ENCODE measurements at regions of chr11 and their contacts with region 1.

Region 1: GRCh38 chr11:14249121-14249963 is 109.6 kb downstream of the RRAS2 start:
- DNase-seq: peak in 1 of 2 experiments; percentile 31
- H3K4me3 ChIP-seq: no peak overlapping the region
- H3K27ac ChIP-seq: no peak overlapping the region
- H3K4me1 ChIP-seq: no peaks in the 10 kb centered on the region
- H3K27me3 ChIP-seq: no peaks in the 10 kb centered on the region
- CTCF ChIP-seq: peak; percentile 90

Region 2: DNA sequence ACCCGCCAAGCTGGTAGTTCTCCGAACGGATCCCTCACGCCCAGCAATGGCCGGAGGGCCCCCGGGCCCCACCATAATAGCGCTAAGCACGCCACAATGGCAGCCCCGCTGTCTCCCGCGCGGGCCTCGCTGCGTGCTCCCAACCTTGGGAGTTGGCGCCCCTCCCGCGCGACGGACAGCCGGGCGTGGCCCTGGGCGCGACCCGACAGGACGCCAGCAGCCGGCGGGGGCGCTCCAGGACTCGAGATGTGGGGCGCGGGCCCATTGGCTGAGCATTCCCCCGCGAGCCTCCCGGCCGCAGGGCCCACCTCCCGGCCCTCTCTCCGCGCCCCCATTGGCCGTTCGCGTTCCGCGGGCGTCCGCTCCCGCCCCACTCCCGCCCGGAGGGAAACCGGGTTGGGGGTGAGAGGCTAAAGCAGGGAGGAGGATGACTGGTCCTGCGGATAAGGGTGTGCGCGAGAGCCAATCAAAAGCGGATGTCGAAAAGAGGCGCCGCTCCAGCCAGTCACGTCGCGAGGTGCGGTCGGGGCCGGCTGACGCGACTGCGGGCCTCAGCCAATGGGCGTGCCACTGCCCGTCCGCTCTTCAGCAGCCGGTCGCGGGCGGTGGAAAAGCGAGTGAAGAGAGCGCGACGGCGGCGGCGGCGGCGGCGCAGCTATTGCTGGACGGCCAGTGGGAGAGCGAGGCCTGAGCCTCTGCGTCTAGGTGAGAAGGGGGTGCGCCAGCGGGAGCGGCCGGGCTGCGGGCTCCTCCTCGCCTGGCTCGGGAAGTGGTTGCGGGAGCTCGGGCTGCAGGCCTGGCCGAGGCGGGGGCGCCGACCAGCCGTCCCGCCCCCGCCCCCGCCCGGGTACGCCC is 581.0 kb before region 1 on chr11 and contains the start of gene FAR1:
- CTCF ChIA-PET with region 1: no interaction called
- POLR2A ChIA-PET with region 1: no interaction called
- intact Hi-C with region 1: loop called (anchors 5 kb)
- DNase-seq: peak; percentile 91 to 94
- H3K4me3 ChIP-seq: peak within 1 kb of the TSS; percentile 73
- H3K27ac ChIP-seq: peak within 1 kb of the TSS; percentile 40
- H3K4me1 ChIP-seq: peaks cover 19% of the 10 kb centered on the region
- H3K27me3 ChIP-seq: no peaks in the 10 kb centered on the region
- CTCF ChIP-seq: no peak; the same call in 1 of the 2 replicates
- total RNA-seq, gene FAR1: 34.1 and 34.4 TPM in 2 replicates

Region 3: GRCh38 chr11:13868710-13869397 is 380.5 kb before region 1 on chr11:
- CTCF ChIA-PET with region 1: no interaction called
- POLR2A ChIA-PET with region 1: no interaction called
- intact Hi-C with region 1: loop called (anchors 2 kb)
- DNase-seq: no peak
- H3K4me3 ChIP-seq: no peak overlapping the region
- H3K27ac ChIP-seq: no peak overlapping the region
- H3K4me1 ChIP-seq: peaks cover 18% of the 10 kb centered on the region
- H3K27me3 ChIP-seq: no peaks in the 10 kb centered on the region
- CTCF ChIP-seq: no peak

Region 4: GRCh38 chr11:13970986-13971385 is 278.4 kb before region 1 on chr11:
- CTCF ChIA-PET with region 1: no interaction called
- POLR2A ChIA-PET with region 1: no interaction called
- intact Hi-C with region 1: loop called (anchors 5 kb)
- DNase-seq: peak; percentile 45 to 72
- H3K4me3 ChIP-seq: no peak overlapping the region
- H3K27ac ChIP-seq: peak overlapping the region; percentile 17; the same call in 1 of the 2 replicates
- H3K4me1 ChIP-seq: peaks cover 12% of the 10 kb centered on the region
- H3K27me3 ChIP-seq: no peaks in the 10 kb centered on the region
- CTCF ChIP-seq: peak; percentile 71

Region 5: DNA sequence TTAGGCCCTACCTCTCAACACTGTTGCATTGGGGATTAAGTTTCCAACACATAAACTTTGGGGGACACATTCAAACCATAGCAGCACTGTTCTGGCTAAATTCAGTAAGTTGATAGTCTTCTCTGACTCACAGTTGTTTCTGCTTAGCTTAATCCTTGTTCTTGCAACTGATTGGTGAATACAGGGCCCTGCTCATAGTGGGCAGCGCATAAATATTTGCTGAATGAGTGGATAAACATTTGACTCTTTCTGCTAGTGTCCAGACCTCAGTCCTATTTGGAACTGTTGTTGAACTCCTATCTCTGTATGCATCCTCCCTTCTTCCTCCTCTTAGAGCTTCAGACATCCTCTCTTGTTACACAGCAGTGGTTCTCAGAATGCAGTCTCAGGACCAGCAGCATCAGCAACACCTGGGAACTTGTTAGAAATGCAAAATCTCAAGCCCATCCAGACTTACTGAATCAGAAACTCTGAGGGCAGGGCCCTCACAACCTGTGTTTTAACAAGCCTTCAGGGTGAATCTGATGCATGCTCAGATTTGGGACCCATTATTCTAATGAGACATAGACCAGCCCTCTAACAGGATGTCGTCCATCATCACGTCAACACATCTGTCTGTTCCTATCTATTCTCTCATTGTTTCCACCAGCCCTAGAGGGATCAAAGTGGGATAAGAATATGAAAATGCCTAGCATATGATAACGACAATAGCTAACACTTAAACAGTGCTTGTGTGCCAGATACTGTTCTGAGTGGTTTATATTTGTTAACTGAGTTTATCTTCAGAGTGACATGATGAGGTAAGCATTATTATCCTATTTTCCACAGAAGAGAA is 264.5 kb before region 1 on chr11:
- CTCF ChIA-PET with region 1: no interaction called
- POLR2A ChIA-PET with region 1: no interaction called
- intact Hi-C with region 1: no loop called
- DNase-seq: no peak
- H3K4me3 ChIP-seq: no peak overlapping the region
- H3K27ac ChIP-seq: no peak overlapping the region
- H3K4me1 ChIP-seq: no peaks in the 10 kb centered on the region
- H3K27me3 ChIP-seq: no peaks in the 10 kb centered on the region
- CTCF ChIP-seq: no peak

Region 6: DNA sequence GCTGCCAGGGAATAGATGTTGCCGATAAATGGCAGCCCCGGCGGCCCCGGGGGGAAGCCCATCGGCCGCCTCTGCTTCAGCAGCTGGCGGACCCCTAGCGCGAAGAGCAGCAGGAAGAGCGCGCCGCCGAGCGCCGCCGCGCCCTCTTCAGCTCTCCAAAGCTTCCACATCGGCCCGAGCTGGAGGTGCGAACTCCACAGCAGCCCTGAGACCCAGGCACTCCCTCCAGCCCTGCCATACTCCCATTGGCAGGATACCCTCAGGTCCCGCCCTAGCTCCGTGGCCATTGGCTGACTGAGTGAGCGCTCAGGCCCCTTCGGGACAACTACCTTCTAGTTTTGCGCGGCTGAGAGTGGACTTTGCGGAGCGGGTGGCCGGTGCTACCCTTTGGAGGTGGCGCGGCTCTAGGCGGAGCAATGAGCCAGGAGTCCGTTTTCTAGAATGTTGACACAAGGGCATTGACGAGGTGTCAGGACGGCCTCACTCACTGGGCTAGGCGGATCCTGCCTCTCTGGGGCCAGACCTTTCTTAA is 642.8 kb after region 1 on chr11 and contains the start of gene CYP2R1:
- CTCF ChIA-PET with region 1: no interaction called
- POLR2A ChIA-PET with region 1: interaction called, 13 read pairs
- intact Hi-C with region 1: no loop called
- DNase-seq: peak; percentile 90 to 91
- H3K4me3 ChIP-seq: peak within 1 kb of the TSS; percentile 97
- H3K27ac ChIP-seq: peak within 1 kb of the TSS; percentile 79
- H3K4me1 ChIP-seq: peaks cover 10% of the 10 kb centered on the region
- H3K27me3 ChIP-seq: no peaks in the 10 kb centered on the region
- CTCF ChIP-seq: no peak
- total RNA-seq, gene CYP2R1: 7.1 and 7.2 TPM in 2 replicates